ENCODE measurements at regions of chr6 and their contacts with region 1.

Region 1: GRCh38 chr6:36027501-36028087 is at the start of gene MAPK14:
- DNase-seq: peak; percentile 99 to 100 (median 100)
- H3K4me3 ChIP-seq: peak within 1 kb of the TSS; percentile 84 to 99 (median 88)
- H3K27ac ChIP-seq: peak within 1 kb of the TSS; percentile 82 to 96 (median 90)
- H3K4me1 ChIP-seq: peaks cover 0 to 36% of the 10 kb centered on the region in 2 donors
- H3K27me3 ChIP-seq: no peaks in the 10 kb centered on the region
- CTCF ChIP-seq: peak; percentile 84 to 99 (median 98)
- POLR2A ChIP-seq: peak; percentile 88 to 98
- total RNA-seq, gene MAPK14: 39.0 to 119 (median 60.9) TPM

Region 2: DNA sequence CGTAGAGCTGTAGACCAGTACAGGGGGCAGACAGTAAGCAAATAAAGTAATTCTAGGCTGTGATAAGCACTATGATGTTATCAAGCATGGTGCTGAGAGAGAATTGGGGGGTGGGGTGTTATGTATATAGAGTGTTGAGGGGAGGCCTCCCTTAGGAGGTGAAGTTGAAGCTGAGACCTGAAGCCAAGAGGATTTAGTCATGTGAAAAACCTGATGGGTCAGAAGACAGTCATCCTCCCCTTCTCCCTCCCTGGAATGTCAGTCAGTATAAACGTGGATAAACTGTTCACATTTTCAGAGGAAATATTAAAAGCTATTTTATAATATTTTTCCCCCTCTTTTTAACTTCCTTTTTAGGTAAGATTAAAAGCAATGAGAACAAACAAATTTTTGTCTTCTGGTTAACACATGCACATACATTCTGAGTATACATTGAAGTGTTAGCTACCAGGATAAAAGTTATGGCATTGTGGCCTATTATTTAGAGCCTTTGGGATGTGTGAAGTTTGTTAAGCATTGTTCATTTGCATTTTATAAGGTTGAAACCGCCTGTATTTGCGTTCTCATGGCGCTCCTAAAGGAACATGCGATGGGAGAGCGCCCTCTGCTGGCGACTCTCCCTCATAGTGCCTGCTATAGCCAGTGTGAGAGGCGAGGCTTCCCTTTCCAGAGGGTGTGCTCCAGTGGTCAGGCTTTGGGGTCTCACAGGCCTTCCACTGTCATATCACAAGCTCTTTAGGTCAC is 67.3 kb after region 1 on chr6:
- intact Hi-C with region 1: loop called (anchors 2 kb)
- DNase-seq: peak; percentile 67 to 94 (median 82)
- H3K4me3 ChIP-seq: no peak overlapping the region
- H3K27ac ChIP-seq: peak overlapping the region in 1 of 5 donors; percentile 9
- H3K4me1 ChIP-seq: peaks cover 0 to 10% of the 10 kb centered on the region in 2 donors
- H3K27me3 ChIP-seq: no peaks in the 10 kb centered on the region
- CTCF ChIP-seq: peak; percentile 94 to 98 (median 96)
- POLR2A ChIP-seq: no peak

Region 3: GRCh38 chr6:36196880-36197548 is 169.4 kb after region 1 on chr6:
- intact Hi-C with region 1: loop called (anchors 10 kb)
- DNase-seq: peak; percentile 99 to 100 (median 100)
- H3K4me3 ChIP-seq: peak overlapping the region in 3 of 4 donors; percentile 50 to 92 (median 74)
- H3K27ac ChIP-seq: peak overlapping the region; percentile 47 to 99 (median 92)
- H3K4me1 ChIP-seq: peaks cover 13 to 36% of the 10 kb centered on the region in 2 donors
- H3K27me3 ChIP-seq: no peaks in the 10 kb centered on the region
- CTCF ChIP-seq: no peak
- POLR2A ChIP-seq: peak; percentile 2 to 59

Region 4: GRCh38 chr6:36204068-36204753 is 176.6 kb after region 1 on chr6:
- intact Hi-C with region 1: loop called (anchors 10 kb)
- DNase-seq: no peak
- H3K4me3 ChIP-seq: no peak overlapping the region
- H3K27ac ChIP-seq: no peak overlapping the region
- H3K4me1 ChIP-seq: peaks cover 5 to 51% of the 10 kb centered on the region in 2 donors
- H3K27me3 ChIP-seq: no peaks in the 10 kb centered on the region
- CTCF ChIP-seq: no peak
- POLR2A ChIP-seq: no peak

Measured in adrenal gland (tissue), 19 donors.